Ascending aorta (tissue), 2 donors: ENCODE measurements at regions of chr4 and their contacts with region 1.

Region 1: GRCh38 chr4:158193171-158193749 is 17.0 kb upstream of the TMEM144 start:
- DNase-seq: no peak
- H3K4me3 ChIP-seq: no peak overlapping the region
- H3K27ac ChIP-seq: peak overlapping the region; percentile 88 to 92
- H3K4me1 ChIP-seq: peaks cover 6 to 29% of the 10 kb centered on the region in 2 donors
- H3K27me3 ChIP-seq: no peaks in the 10 kb centered on the region
- CTCF ChIP-seq: peak; percentile 51 to 65 (median 52)

Region 2: GRCh38 chr4:158209825-158210807 is 16.9 kb after region 1 on chr4 and contains the start of gene TMEM144:
- intact Hi-C with region 1: loop called (anchors 2 kb)
- DNase-seq: peak; percentile 92 to 98
- H3K4me3 ChIP-seq: peak within 1 kb of the TSS; percentile 54
- H3K27ac ChIP-seq: peak within 1 kb of the TSS; percentile 94 to 96
- H3K4me1 ChIP-seq: peaks cover 0 to 28% of the 10 kb centered on the region in 2 donors
- H3K27me3 ChIP-seq: no peaks in the 10 kb centered on the region
- CTCF ChIP-seq: peak in 1 of 3 experiments; percentile 19
- total RNA-seq, gene TMEM144: 4.0 TPM

Region 3: GRCh38 chr4:158253350-158253980 is 60.2 kb after region 1 on chr4:
- intact Hi-C with region 1: loop called (anchors 1 kb)
- DNase-seq: peak in 1 of 2 donors; percentile 72
- H3K4me3 ChIP-seq: peak overlapping the region in 1 of 2 donors; percentile 2
- H3K27ac ChIP-seq: peak overlapping the region; percentile 40 to 49
- H3K4me1 ChIP-seq: no peaks in the 10 kb centered on the region
- H3K27me3 ChIP-seq: no peaks in the 10 kb centered on the region
- CTCF ChIP-seq: peak; percentile 47 to 73 (median 57)

Region 4: GRCh38 chr4:158333820-158334219 is 140.6 kb after region 1 on chr4:
- intact Hi-C with region 1: no loop called
- DNase-seq: no peak
- H3K4me3 ChIP-seq: no peak overlapping the region
- H3K27ac ChIP-seq: no peak overlapping the region
- H3K4me1 ChIP-seq: no peaks in the 10 kb centered on the region
- H3K27me3 ChIP-seq: no peaks in the 10 kb centered on the region
- CTCF ChIP-seq: no peak